ENCODE measurements at regions of chr7 and their contacts with region 1.

Region 1: GRCh38 chr7:105141068-105141467 is 127.1 kb downstream of the KMT2E start:
- DNase-seq: peak; percentile 66
- H3K4me3 ChIP-seq: no peak overlapping the region
- H3K27ac ChIP-seq: no peak overlapping the region
- H3K4me1 ChIP-seq: no peaks in the 10 kb centered on the region
- H3K27me3 ChIP-seq: no peaks in the 10 kb centered on the region
- CTCF ChIP-seq: peak; percentile 65
- EP300 ChIP-seq: no peak
- RAD21 ChIP-seq: peak; percentile 71

Region 2: GRCh38 chr7:105118612-105119600 is 22.2 kb before region 1 on chr7:
- CTCF ChIA-PET with region 1: interaction called, 14 read pairs
- POLR2A ChIA-PET with region 1: interaction called, 3 read pairs
- DNase-seq: no peak
- H3K4me3 ChIP-seq: no peak overlapping the region
- H3K27ac ChIP-seq: no peak overlapping the region
- H3K4me1 ChIP-seq: peaks cover 0 to 8% of the 10 kb centered on the region in 2 experiments; a peak in 2 of 4 replicates
- H3K27me3 ChIP-seq: no peaks in the 10 kb centered on the region
- CTCF ChIP-seq: no peak
- EP300 ChIP-seq: no peak
- RAD21 ChIP-seq: no peak

Region 3: DNA sequence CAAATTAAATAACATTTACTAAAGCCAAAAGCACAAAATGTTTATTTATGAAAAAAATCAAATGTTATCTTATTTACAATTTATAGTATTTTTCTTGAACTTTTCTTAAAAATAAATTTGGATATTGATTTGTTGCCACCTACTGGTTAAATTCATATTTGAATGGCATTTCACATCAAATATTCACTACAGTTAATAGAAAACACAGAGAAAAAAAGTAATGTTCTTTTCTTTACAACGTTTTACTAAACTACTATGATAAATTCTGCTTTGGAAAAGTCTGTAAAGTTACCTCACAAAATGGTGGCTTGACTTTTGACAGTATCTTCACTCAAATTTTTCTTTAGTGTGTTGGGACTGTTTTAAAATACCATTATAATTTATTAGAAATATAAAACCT is 194.9 kb after region 1 on chr7:
- CTCF ChIA-PET with region 1: interaction called, 10 read pairs
- POLR2A ChIA-PET with region 1: no interaction called
- DNase-seq: peak; percentile 34
- H3K4me3 ChIP-seq: no peak overlapping the region
- H3K27ac ChIP-seq: no peak overlapping the region
- H3K4me1 ChIP-seq: peaks cover 0 to 6% of the 10 kb centered on the region in 2 experiments; a peak in 1 of 4 replicates
- H3K27me3 ChIP-seq: no peaks in the 10 kb centered on the region
- CTCF ChIP-seq: peak; percentile 72
- EP300 ChIP-seq: no peak
- RAD21 ChIP-seq: peak; percentile 50

Measured in SK-N-SH (cell line).